ENCODE measurements at regions of chr11 and their contacts with region 1.

Region 1: DNA sequence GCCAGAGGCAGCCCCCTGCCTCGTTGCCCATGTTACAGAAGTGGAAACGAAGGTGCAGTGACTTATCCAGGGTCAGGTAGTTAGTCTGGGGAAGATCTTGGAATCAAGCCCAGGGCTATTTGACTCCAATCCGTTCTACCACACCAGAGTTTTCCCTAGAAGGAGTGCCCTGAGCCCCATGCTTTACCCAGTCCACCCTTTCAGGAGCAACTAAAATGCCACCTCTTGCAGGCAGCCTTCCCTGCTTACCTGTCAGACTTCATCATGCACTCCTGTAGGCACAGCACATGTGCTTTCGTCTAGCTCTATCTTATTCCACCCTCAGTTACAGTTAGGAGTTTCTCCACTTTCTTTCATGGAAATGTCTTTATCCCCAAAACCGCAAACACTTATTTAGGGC is 80.2 kb downstream of the CHST1 start:
- DNase-seq: no peak
- H3K4me3 ChIP-seq: no peak overlapping the region
- CTCF ChIP-seq: no peak

Region 2: DNA sequence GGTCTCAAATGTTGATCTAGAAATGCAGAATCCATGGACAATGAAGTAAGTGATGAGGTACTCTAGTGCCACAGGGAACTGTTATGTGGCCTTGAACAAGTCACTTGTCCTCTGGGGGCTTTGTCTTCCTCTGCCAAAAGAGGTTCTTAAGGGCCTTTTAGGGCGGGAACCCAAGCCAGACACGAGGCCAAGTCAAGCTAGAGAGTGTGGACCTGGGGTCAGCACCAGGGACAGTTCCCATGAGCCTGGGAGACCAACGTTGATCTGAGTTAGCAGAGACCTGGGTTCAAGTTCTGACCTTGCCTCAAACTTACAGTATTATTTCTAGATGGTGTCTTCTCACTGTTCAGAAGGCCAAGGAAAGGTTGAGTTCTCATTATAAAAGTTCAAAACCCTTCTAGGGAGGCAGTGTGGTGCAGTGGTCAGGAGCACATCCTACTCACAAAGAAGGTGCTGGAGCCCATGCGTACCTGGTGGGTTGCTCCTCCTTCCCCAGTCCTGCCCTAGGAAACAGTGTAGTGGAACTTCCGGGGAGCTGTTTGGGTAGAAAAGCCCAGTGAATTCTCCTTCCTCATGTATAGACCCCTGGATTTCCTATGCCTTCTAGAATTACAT is 41.3 kb before region 1 on chr11:
- in situ Hi-C with region 1: loop called (anchors 5 kb)
- DNase-seq: no peak
- H3K4me3 ChIP-seq: no peak overlapping the region
- CTCF ChIP-seq: no peak

Region 3: GRCh38 chr11:45683271-45684058 is 98.3 kb after region 1 on chr11:
- in situ Hi-C with region 1: no loop called
- DNase-seq: no peak
- H3K4me3 ChIP-seq: no peak overlapping the region
- CTCF ChIP-seq: no peak

Region 4: GRCh38 chr11:45794169-45794568 is 209.0 kb after region 1 on chr11:
- in situ Hi-C with region 1: no loop called
- DNase-seq: no peak
- H3K4me3 ChIP-seq: no peak overlapping the region
- CTCF ChIP-seq: no peak